Endothelial cell of umbilical vein (primary cell): ENCODE measurements at regions of chr9 and their contacts with region 1.

Region 1: GRCh38 chr9:14768405-14769229 is 46.1 kb upstream of the CER1 start:
- DNase-seq: peak; percentile 77
- H3K4me3 ChIP-seq: no peak overlapping the region
- H3K27ac ChIP-seq: no peak overlapping the region
- H3K4me1 ChIP-seq: peaks cover 3% of the 10 kb centered on the region
- H3K27me3 ChIP-seq: no peaks in the 10 kb centered on the region
- CTCF ChIP-seq: peak; percentile 44 to 47
- POLR2A ChIP-seq: no peak

Region 2: GRCh38 chr9:14428781-14429230 is 339.8 kb before region 1 on chr9:
- CTCF ChIA-PET with region 1: interaction called, 12 read pairs
- POLR2A ChIA-PET with region 1: no interaction called
- dilution Hi-C with region 1: no loop called
- intact Hi-C with region 1: no loop called
- DNase-seq: peak; percentile 68
- H3K4me3 ChIP-seq: no peak overlapping the region
- H3K27ac ChIP-seq: no peak overlapping the region
- H3K4me1 ChIP-seq: peaks cover 15% of the 10 kb centered on the region
- H3K27me3 ChIP-seq: no peaks in the 10 kb centered on the region
- CTCF ChIP-seq: peak; percentile 79 to 84
- POLR2A ChIP-seq: no peak

Region 3: GRCh38 chr9:14578030-14578429 is 190.6 kb before region 1 on chr9:
- CTCF ChIA-PET with region 1: no interaction called
- POLR2A ChIA-PET with region 1: no interaction called
- dilution Hi-C with region 1: no loop called
- intact Hi-C with region 1: no loop called
- DNase-seq: no peak
- H3K4me3 ChIP-seq: no peak overlapping the region
- H3K27ac ChIP-seq: no peak overlapping the region
- H3K4me1 ChIP-seq: peaks cover 11% of the 10 kb centered on the region
- H3K27me3 ChIP-seq: no peaks in the 10 kb centered on the region
- CTCF ChIP-seq: no peak
- POLR2A ChIP-seq: no peak

Region 4: DNA sequence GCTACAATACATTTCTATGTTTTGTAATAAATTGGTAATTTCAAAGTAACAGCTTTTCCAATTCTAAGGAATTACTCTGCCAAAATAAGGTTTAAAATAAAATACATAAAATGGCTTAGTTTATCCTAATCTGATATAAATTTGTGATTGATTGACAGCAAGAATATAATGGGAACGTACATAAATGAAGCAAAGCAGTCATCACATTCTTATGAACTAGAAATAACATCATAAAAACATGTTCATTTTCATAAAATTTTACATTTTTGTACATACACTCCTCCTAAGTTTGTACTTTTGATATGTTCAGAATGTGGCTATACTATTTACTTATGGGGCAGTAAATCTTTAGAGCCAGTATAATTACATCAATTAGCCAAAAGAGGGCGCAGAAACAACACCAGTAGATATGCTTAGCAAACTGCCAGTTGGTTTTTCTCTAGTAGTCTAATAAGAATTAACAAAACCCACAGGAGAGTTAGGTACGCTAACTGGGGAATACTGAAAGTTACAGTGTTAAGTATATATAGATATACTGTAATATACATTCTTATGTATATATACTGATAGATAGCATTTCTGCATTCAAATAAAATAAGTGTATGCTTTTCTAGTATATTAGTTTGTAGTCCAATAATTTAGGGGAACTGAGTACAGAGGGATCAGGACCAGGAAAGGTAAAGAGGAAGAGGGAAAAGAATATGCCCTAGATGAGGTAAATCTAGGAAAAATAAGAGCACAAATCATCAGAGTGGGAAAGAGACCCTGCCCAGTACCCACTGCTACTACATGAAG is 152.2 kb before region 1 on chr9:
- CTCF ChIA-PET with region 1: interaction called, 100 read pairs
- POLR2A ChIA-PET with region 1: no interaction called
- dilution Hi-C with region 1: no loop called
- intact Hi-C with region 1: loop called (anchors 1 kb)
- DNase-seq: peak; percentile 68
- H3K4me3 ChIP-seq: no peak overlapping the region
- H3K27ac ChIP-seq: no peak overlapping the region
- H3K4me1 ChIP-seq: no peaks in the 10 kb centered on the region
- H3K27me3 ChIP-seq: no peaks in the 10 kb centered on the region
- CTCF ChIP-seq: peak; percentile 37 to 46
- POLR2A ChIP-seq: no peak

Region 5: GRCh38 chr9:14661421-14662059 is 107.1 kb before region 1 on chr9:
- CTCF ChIA-PET with region 1: interaction called, 62 read pairs
- POLR2A ChIA-PET with region 1: no interaction called
- dilution Hi-C with region 1: no loop called
- intact Hi-C with region 1: loop called (anchors 2 kb)
- DNase-seq: peak; percentile 73
- H3K4me3 ChIP-seq: no peak overlapping the region
- H3K27ac ChIP-seq: no peak overlapping the region
- H3K4me1 ChIP-seq: peaks cover 6% of the 10 kb centered on the region
- H3K27me3 ChIP-seq: no peaks in the 10 kb centered on the region
- CTCF ChIP-seq: peak; percentile 28 to 50
- POLR2A ChIP-seq: no peak

Region 6: GRCh38 chr9:14779566-14780022 is 11.0 kb after region 1 on chr9:
- CTCF ChIA-PET with region 1: interaction called, 10 read pairs
- POLR2A ChIA-PET with region 1: no interaction called
- dilution Hi-C with region 1: no loop called
- intact Hi-C with region 1: no loop called
- DNase-seq: no peak
- H3K4me3 ChIP-seq: no peak overlapping the region
- H3K27ac ChIP-seq: no peak overlapping the region
- H3K4me1 ChIP-seq: no peaks in the 10 kb centered on the region
- H3K27me3 ChIP-seq: peaks cover 3 to 5% of the 10 kb centered on the region in 2 experiments
- CTCF ChIP-seq: no peak
- POLR2A ChIP-seq: no peak